ENCODE measurements at regions of chr19 and their contacts with region 1.

Region 1: GRCh38 chr19:57914531-57914930 is 1.9 kb downstream of the ZNF417 start:
- DNase-seq: no peak
- H3K4me3 ChIP-seq: no peak overlapping the region
- H3K4me3 Mint-ChIP-seq: peak overlapping the region; percentile 53 to 99 (median 97)
- H3K27ac ChIP-seq: no peak overlapping the region
- H3K27ac Mint-ChIP-seq: peak overlapping the region in 6 of 7 donors; percentile 5 to 96 (median 34)
- H3K4me1 ChIP-seq: peaks cover 13% of the 10 kb centered on the region
- H3K4me1 Mint-ChIP-seq: peaks cover 22 to 48% (median 34%) of the 10 kb centered on the region in 4 donors
- H3K27me3 ChIP-seq: no peaks in the 10 kb centered on the region
- H3K27me3 Mint-ChIP-seq: no peaks in the 10 kb centered on the region

Region 2: GRCh38 chr19:57769345-57770131 is 145.0 kb before region 1 on chr19 and contains the start of gene ZNF586:
- CTCF ChIA-PET with region 1: no interaction called
- POLR2A ChIA-PET with region 1: interaction called, 7 read pairs
- intact Hi-C with region 1: loop called (anchors 1 kb)
- DNase-seq: peak; percentile 82 to 91 (median 85)
- H3K4me3 ChIP-seq: peak within 1 kb of the TSS; percentile 62 to 75
- H3K4me3 Mint-ChIP-seq: peak within 1 kb of the TSS; percentile 96 to 99 (median 96)
- H3K27ac ChIP-seq: peak within 1 kb of the TSS; percentile 75
- H3K27ac Mint-ChIP-seq: peak within 1 kb of the TSS; percentile 91 to 98 (median 96)
- H3K4me1 ChIP-seq: peaks cover 20% of the 10 kb centered on the region
- H3K4me1 Mint-ChIP-seq: peaks cover 23 to 51% (median 33%) of the 10 kb centered on the region in 4 donors
- H3K27me3 ChIP-seq: no peaks in the 10 kb centered on the region
- H3K27me3 Mint-ChIP-seq: no peaks in the 10 kb centered on the region
- total RNA-seq, gene ZNF586: 46.4 to 51.7 TPM

Region 3: DNA sequence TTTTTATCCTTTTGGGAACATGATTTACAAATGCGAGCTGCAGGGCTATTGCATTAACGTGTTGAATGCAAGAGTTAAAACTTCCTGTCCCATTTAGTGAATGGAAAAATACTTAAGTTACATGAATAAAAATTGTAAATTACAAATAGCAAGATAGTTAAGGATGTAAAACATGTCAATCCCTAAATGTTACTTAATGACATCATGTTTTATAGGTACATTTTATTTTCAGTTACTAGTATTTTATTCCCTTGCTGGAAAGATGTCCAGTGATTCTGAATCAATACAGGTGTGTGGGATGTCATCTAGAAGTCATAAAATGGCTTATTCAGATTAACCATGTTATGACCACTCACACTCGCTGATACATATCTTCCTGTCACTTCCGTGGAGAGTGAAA is 132.7 kb before region 1 on chr19:
- CTCF ChIA-PET with region 1: no interaction called
- POLR2A ChIA-PET with region 1: no interaction called
- intact Hi-C with region 1: no loop called
- DNase-seq: no peak
- H3K4me3 ChIP-seq: no peak overlapping the region
- H3K4me3 Mint-ChIP-seq: no peak overlapping the region
- H3K27ac ChIP-seq: no peak overlapping the region
- H3K27ac Mint-ChIP-seq: no peak overlapping the region
- H3K4me1 ChIP-seq: no peaks in the 10 kb centered on the region
- H3K4me1 Mint-ChIP-seq: peaks cover 0 to 3% (median 0%) of the 10 kb centered on the region in 4 donors
- H3K27me3 ChIP-seq: no peaks in the 10 kb centered on the region
- H3K27me3 Mint-ChIP-seq: no peaks in the 10 kb centered on the region

Region 4: DNA sequence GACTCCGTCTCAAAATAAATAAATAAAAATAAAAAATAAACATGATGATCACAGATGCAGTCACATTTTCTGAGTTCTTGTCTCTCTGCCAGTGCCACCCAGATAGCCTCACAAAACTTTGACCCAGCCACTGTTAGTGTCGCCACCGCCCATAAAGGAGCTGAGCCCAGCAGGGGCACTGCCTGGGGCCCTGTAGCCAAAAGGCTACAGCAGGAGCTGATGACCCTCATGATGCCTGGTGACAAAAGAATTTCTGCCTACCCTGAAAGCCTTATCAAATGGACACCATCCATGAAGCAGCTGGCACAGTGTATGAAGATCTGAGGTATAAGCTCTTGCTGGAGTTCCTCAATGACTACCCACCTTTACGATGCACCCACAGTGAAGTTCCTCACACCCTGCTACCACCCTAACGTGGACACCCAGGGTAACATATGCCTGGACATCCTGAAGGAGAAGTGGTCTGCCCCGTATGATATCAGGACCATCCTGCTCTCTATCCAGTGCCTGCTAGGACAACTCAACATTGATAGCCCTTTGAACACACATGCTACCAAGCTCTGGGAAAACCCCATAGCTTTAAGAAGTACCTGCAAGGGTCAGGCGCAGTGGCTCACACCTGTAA is 46.6 kb before region 1 on chr19:
- CTCF ChIA-PET with region 1: no interaction called
- POLR2A ChIA-PET with region 1: no interaction called
- intact Hi-C with region 1: no loop called
- DNase-seq: no peak
- H3K4me3 ChIP-seq: no peak overlapping the region
- H3K4me3 Mint-ChIP-seq: no peak overlapping the region
- H3K27ac ChIP-seq: no peak overlapping the region
- H3K27ac Mint-ChIP-seq: no peak overlapping the region
- H3K4me1 ChIP-seq: no peaks in the 10 kb centered on the region
- H3K4me1 Mint-ChIP-seq: no peaks in the 10 kb centered on the region
- H3K27me3 ChIP-seq: no peaks in the 10 kb centered on the region
- H3K27me3 Mint-ChIP-seq: no peaks in the 10 kb centered on the region

Region 5: DNA sequence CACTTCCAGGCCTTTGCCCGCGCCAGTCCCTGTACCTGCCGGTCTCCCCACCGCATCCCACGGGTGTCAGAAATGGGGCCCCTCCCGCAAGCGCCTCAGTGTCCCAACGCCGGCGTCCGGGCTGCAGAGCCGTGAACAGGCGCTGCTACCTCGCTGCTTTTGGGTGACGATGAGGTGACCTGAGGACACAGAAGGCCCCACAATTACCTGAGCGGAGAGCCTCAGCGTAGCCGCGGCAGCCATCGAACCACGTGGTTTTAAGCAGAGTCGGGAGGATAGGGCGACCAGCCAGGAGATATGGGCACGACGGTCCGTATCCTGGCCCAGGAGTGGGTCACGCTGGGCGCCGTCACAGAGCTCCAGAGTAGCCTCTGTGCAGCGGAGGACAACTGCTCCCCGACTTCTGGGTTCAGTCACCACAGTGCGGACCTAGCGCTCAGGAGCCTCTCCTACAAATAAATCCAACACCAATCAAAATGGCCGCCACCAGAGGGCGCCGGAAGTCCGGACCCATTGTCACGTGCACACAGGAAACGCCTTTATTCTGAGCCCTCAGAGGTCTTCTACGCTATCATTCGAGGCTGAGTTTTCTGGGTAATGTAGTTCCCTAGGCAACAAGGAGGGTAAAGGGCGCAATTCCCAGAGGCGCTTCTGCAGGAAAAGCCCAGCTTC is 25.8 kb before region 1 on chr19 and contains the start of gene ZNF814:
- CTCF ChIA-PET with region 1: no interaction called
- POLR2A ChIA-PET with region 1: interaction called, 6 read pairs
- intact Hi-C with region 1: loop called (anchors 1 kb)
- DNase-seq: peak; percentile 75 to 83 (median 80)
- H3K4me3 ChIP-seq: peak within 1 kb of the TSS; percentile 76 to 77
- H3K4me3 Mint-ChIP-seq: peak within 1 kb of the TSS; percentile 88 to 92 (median 89)
- H3K27ac ChIP-seq: peak within 1 kb of the TSS; percentile 50
- H3K27ac Mint-ChIP-seq: peak within 1 kb of the TSS; percentile 30 to 86 (median 75)
- H3K4me1 ChIP-seq: peaks cover 20% of the 10 kb centered on the region
- H3K4me1 Mint-ChIP-seq: peaks cover 10 to 27% (median 21%) of the 10 kb centered on the region in 4 donors
- H3K27me3 ChIP-seq: no peaks in the 10 kb centered on the region
- H3K27me3 Mint-ChIP-seq: no peaks in the 10 kb centered on the region
- total RNA-seq, gene ZNF814: 32.3 to 35.3 TPM

Region 6: DNA sequence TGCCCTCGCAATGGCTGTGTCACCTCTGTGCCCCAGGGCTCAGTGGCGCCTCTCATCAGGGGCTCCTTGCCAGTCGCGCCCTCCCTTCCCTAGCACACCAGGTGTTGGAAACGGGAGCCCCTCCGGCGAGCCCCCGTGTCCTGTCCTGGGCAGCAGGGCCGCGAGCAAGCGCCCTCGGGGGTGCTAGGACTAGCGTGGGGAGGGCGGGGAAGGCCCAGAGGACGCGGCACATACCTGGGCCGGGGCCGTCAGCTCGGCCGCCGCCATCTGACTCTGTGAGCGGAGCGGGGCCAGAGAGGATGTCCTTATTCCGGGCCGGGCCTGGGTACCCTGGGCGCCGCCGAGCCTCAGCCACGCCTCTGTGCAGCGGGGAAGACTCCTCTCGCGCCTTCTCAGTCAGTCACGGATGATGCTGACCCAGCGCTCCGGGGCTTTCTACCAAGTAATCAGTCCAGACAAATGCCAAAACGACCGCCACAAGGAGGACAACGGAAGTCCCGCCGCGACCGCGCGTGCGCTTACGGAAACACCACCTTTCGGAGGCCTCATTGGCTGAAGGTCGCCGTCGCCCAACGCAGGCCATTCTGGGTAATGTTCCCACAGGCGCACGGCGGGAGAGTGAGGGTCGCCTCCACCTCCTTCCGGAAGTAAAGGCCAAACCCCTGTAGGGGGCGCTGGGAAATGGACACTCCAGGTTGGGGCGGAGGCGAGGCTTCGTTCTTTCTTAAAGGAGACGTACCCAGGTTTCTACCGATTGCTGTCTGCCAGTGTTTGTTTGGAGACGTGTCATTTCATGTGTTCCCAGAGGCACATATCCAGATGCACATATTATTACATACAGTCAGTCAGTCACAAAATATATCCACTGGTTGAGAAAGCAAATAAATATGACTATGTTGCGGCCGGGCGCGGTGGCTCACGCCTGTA is 32.9 kb after region 1 on chr19 and contains the start of gene ZNF256:
- CTCF ChIA-PET with region 1: no interaction called
- POLR2A ChIA-PET with region 1: no interaction called
- intact Hi-C with region 1: loop called (anchors 1 kb)
- DNase-seq: peak; percentile 79 to 85 (median 82)
- H3K4me3 ChIP-seq: peak within 1 kb of the TSS; percentile 69 to 89
- H3K4me3 Mint-ChIP-seq: peak within 1 kb of the TSS; percentile 90 to 98 (median 95)
- H3K27ac ChIP-seq: peak within 1 kb of the TSS; percentile 66
- H3K27ac Mint-ChIP-seq: peak within 1 kb of the TSS; percentile 78 to 98 (median 92)
- H3K4me1 ChIP-seq: peaks cover 18% of the 10 kb centered on the region
- H3K4me1 Mint-ChIP-seq: peaks cover 15 to 24% (median 20%) of the 10 kb centered on the region in 4 donors
- H3K27me3 ChIP-seq: no peaks in the 10 kb centered on the region
- H3K27me3 Mint-ChIP-seq: no peaks in the 10 kb centered on the region
- total RNA-seq, gene ZNF256: 12.4 to 13.9 TPM

Region 7: GRCh38 chr19:58037927-58038687 is 123.6 kb after region 1 on chr19:
- CTCF ChIA-PET with region 1: no interaction called
- POLR2A ChIA-PET with region 1: no interaction called
- intact Hi-C with region 1: no loop called
- DNase-seq: no peak
- H3K4me3 ChIP-seq: no peak overlapping the region
- H3K4me3 Mint-ChIP-seq: no peak overlapping the region
- H3K27ac ChIP-seq: no peak overlapping the region
- H3K27ac Mint-ChIP-seq: no peak overlapping the region
- H3K4me1 ChIP-seq: no peaks in the 10 kb centered on the region
- H3K4me1 Mint-ChIP-seq: no peaks in the 10 kb centered on the region
- H3K27me3 ChIP-seq: no peaks in the 10 kb centered on the region
- H3K27me3 Mint-ChIP-seq: peaks cover 11 to 14% of the 10 kb centered on the region in 2 donors

Region 8: DNA sequence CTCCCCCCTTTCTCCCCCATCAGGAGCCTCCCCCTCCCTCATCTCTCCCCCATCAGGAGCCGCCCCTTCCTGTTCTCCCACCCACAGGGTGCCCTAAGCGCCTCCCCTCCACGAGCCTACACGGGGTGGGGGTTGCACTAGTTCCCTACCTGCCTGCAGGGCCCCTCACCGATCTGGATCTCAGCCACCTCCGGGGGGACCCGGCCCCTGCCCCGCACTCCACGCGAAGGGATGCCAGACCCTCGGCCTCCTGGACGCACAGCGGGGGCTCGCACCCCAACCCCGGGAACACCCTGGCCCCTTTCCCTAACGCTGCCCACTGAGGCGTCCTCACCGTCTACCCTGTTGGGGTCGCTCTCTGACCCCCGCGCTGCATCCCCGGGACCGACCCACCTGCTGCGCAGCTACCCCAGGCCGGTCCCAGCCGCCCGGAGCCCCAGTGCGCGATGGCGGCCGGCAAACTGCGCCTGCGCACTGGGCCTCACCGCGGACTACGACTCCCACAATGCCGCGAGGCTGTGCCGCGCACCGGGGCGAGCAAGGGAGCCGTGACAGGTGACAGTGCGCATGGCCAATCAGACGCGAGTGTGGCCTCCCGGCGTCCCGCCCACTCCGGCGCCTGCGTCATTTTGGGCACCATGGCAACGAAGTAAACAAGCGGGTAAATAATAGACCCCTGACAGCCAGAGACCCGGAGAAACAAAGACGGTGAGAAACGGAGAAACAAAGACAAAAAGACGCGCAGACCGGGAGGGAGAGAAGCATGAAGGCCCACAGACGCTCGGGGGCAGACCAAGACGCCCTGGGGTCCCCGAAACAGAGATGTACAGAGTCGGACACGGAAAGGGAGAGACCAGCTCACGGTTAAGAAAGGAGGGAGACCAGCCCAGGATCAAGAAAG is 183.5 kb after region 1 on chr19 and contains the start of gene ZSCAN18:
- CTCF ChIA-PET with region 1: no interaction called
- POLR2A ChIA-PET with region 1: interaction called, 3 read pairs
- intact Hi-C with region 1: loop called (anchors 5 kb)
- DNase-seq: peak; percentile 98 to 99 (median 99)
- H3K4me3 ChIP-seq: peak within 1 kb of the TSS; percentile 61 to 69
- H3K4me3 Mint-ChIP-seq: peak within 1 kb of the TSS; percentile 88 to 97 (median 92)
- H3K27ac ChIP-seq: peak within 1 kb of the TSS; percentile 98
- H3K27ac Mint-ChIP-seq: peak within 1 kb of the TSS; percentile 100
- H3K4me1 ChIP-seq: peaks cover 5% of the 10 kb centered on the region
- H3K4me1 Mint-ChIP-seq: peaks cover 7 to 28% (median 14%) of the 10 kb centered on the region in 4 donors
- H3K27me3 ChIP-seq: no peaks in the 10 kb centered on the region
- H3K27me3 Mint-ChIP-seq: peaks cover 0 to 3% of the 10 kb centered on the region in 2 donors
- total RNA-seq, gene ZSCAN18: 63.2 to 69.1 TPM

Measured in CD4-positive, alpha-beta memory T cell (primary cell).